Activated B cell treated with CpG ODN at 0.5 μM for 24 hours (primary cell): ENCODE measurements at regions of chr1 and their contacts with region 1.

Region 1: GRCh38 chr1:59020151-59020997 is 236.5 kb upstream of the JUN start:
- DNase-seq: no peak
- ATAC-seq: peak; percentile 96
- H3K4me3 Mint-ChIP-seq: peak overlapping the region; percentile 77
- H3K27ac Mint-ChIP-seq: peak overlapping the region; percentile 91
- H3K4me1 Mint-ChIP-seq: peaks cover 52% of the 10 kb centered on the region
- H3K27me3 Mint-ChIP-seq: no peaks in the 10 kb centered on the region
- CTCF ChIP-seq: no peak

Region 2: DNA sequence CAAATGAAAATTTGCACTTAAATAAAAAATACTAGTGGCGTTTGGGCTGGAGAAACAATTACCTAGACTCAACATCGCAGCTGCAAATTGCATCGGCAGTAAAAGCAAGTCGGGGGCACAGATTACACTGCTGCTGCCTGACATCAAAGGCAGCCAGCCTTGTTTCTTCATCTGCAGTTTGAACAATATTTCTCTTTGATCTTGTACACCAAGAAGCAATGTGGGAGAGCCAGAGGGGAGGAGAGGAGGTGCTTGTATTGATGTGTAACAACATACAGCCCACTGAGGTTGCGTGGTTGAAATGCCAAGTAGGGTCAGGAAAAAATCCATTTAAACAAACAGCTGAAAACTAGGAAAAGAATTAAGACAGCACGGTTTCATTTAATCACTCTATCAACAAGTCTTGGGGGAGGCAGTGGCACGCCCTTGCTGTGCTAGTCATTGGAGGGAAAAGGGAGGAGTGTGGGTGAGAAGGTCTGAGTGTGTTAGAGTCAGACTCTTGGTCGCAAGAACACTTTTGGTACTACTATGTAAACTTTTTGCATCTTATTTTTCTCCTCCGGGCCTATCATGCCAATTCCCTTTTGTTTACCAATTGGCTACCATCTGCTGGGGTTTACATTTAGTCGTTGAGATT is 930.4 kb before region 1 on chr1:
- CTCF ChIA-PET with region 1: no interaction called
- POLR2A ChIA-PET with region 1: no interaction called
- intact Hi-C with region 1: no loop called
- DNase-seq: no peak
- ATAC-seq: no peak
- H3K4me3 Mint-ChIP-seq: no peak overlapping the region
- H3K27ac Mint-ChIP-seq: no peak overlapping the region
- H3K4me1 Mint-ChIP-seq: no peaks in the 10 kb centered on the region
- H3K27me3 Mint-ChIP-seq: peaks cover 8% of the 10 kb centered on the region
- CTCF ChIP-seq: no peak

Region 3: DNA sequence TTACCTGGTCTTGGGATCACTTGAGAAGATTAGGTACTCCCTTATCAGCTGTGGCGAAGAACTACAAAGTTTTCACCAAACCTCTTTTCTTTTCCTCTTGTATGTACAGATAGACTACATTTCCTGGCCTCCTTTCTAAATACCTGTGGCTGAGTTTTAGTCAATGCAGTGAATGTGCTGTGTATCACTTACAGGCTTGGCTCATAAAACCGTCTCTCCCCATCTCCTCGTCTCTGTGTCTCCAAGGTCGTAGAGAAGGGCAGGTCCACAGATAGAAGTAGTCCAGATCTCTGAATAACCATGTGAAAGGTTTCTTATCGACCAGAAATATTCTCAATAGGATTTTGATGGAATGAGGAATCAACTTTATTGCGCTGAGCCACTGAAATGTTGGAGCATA is 227.5 kb before region 1 on chr1:
- CTCF ChIA-PET with region 1: no interaction called
- POLR2A ChIA-PET with region 1: no interaction called
- intact Hi-C with region 1: no loop called
- DNase-seq: no peak
- ATAC-seq: no peak
- H3K4me3 Mint-ChIP-seq: no peak overlapping the region
- H3K27ac Mint-ChIP-seq: no peak overlapping the region
- H3K4me1 Mint-ChIP-seq: peaks cover 29% of the 10 kb centered on the region
- H3K27me3 Mint-ChIP-seq: no peaks in the 10 kb centered on the region
- CTCF ChIP-seq: no peak

Region 4: DNA sequence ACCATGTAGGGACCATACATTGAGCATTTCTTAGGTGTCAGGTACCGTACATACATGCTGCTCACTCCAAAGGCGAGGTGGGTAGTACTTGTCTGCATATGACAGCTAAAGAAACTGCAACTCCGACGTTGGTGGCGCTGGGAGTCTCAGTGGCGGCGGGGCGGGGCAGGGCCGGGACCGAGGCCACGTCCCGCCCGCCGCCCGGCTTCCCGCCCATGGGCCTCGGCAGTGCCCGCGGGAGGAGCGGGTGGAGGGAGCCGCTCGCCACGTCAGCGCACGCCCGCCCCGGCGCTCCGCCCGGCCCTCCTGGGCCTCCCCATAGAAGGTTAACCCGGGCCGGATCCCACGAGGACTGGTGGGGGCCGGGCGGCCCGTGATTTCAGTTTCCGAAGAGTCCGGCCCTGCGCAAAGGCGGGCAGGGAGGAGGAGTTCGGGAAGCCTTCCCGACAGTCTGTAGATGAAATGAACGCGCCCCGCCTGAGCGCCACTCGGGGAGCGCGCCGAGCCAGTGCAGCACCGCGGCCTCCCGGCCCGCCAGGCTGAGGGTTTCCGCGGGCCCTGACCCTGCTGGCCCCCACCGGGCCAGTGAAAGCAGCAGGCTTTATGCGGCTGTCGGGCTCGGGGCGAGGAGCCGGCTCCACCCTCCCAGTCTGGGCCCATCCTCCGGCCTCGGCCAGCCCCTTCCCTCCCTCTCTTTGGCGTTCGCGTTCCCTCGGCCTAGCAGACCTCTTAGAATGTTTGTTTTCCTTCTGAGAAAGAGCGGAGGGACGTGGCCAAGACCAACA is 116.7 kb before region 1 on chr1:
- CTCF ChIA-PET with region 1: no interaction called
- POLR2A ChIA-PET with region 1: interaction called, 3 read pairs
- intact Hi-C with region 1: loop called (anchors 1 kb)
- DNase-seq: peak; percentile 75
- ATAC-seq: peak; percentile 90
- H3K4me3 Mint-ChIP-seq: peak overlapping the region; percentile 84
- H3K27ac Mint-ChIP-seq: peak overlapping the region; percentile 81
- H3K4me1 Mint-ChIP-seq: peaks cover 16% of the 10 kb centered on the region
- H3K27me3 Mint-ChIP-seq: no peaks in the 10 kb centered on the region
- CTCF ChIP-seq: no peak

Region 5: DNA sequence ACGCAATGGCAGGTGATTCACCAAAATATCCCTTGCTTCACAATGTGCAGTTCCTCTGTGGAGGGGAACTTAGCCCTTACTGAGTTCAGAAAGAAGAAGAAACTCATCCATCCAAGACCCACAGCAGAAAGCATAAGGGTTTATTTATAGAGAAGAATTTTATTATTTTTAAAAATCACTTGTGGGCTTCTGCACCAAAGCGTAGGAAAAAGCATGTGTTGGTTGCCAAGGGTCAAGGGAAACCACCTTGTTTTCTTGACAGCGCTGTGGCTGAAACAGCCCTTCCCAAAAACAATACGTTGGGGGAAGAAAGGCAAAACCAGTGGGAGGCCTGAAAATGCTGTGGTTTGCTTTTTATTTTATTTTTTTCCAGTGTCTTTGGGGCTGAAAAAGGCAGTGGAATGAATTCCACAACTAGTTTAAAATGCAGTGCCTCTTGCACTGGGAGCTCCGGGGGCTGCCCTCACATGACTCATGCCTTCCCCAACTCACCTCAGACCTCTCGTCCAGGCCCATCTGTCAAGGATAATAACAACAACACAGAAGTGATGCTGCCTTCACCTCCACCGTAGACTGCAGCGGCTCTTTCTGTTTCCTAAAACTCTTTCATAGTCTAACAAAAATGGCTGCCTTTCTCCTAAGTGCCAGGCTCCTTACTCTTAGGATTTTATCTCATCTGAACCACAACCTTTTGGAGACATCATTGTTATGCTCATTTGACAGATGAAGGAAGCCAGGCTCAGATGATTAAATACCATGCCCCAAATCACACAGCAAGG is 12.4 kb before region 1 on chr1:
- CTCF ChIA-PET with region 1: interaction called, 3 read pairs
- POLR2A ChIA-PET with region 1: interaction called, 10 read pairs
- intact Hi-C with region 1: loop called (anchors 1 kb)
- DNase-seq: no peak
- ATAC-seq: peak; percentile 76
- H3K4me3 Mint-ChIP-seq: peak overlapping the region; percentile 62
- H3K27ac Mint-ChIP-seq: peak overlapping the region; percentile 90
- H3K4me1 Mint-ChIP-seq: peaks cover 82% of the 10 kb centered on the region
- H3K27me3 Mint-ChIP-seq: no peaks in the 10 kb centered on the region
- CTCF ChIP-seq: no peak

Region 6: GRCh38 chr1:59046730-59047157 is 26.4 kb after region 1 on chr1:
- CTCF ChIA-PET with region 1: no interaction called
- POLR2A ChIA-PET with region 1: interaction called, 5 read pairs
- intact Hi-C with region 1: loop called (anchors 2 kb)
- DNase-seq: peak; percentile 22
- ATAC-seq: peak; percentile 96
- H3K4me3 Mint-ChIP-seq: no peak overlapping the region
- H3K27ac Mint-ChIP-seq: peak overlapping the region; percentile 91
- H3K4me1 Mint-ChIP-seq: peaks cover 31% of the 10 kb centered on the region
- H3K27me3 Mint-ChIP-seq: no peaks in the 10 kb centered on the region
- CTCF ChIP-seq: no peak

Region 7: GRCh38 chr1:59146651-59147358 is 126.4 kb after region 1 on chr1:
- CTCF ChIA-PET with region 1: no interaction called
- POLR2A ChIA-PET with region 1: interaction called, 3 read pairs
- intact Hi-C with region 1: loop called (anchors 5 kb)
- DNase-seq: peak; percentile 64
- ATAC-seq: peak; percentile 84
- H3K4me3 Mint-ChIP-seq: peak overlapping the region; percentile 85
- H3K27ac Mint-ChIP-seq: peak overlapping the region; percentile 82
- H3K4me1 Mint-ChIP-seq: peaks cover 46% of the 10 kb centered on the region
- H3K27me3 Mint-ChIP-seq: no peaks in the 10 kb centered on the region
- CTCF ChIP-seq: no peak

Region 8: DNA sequence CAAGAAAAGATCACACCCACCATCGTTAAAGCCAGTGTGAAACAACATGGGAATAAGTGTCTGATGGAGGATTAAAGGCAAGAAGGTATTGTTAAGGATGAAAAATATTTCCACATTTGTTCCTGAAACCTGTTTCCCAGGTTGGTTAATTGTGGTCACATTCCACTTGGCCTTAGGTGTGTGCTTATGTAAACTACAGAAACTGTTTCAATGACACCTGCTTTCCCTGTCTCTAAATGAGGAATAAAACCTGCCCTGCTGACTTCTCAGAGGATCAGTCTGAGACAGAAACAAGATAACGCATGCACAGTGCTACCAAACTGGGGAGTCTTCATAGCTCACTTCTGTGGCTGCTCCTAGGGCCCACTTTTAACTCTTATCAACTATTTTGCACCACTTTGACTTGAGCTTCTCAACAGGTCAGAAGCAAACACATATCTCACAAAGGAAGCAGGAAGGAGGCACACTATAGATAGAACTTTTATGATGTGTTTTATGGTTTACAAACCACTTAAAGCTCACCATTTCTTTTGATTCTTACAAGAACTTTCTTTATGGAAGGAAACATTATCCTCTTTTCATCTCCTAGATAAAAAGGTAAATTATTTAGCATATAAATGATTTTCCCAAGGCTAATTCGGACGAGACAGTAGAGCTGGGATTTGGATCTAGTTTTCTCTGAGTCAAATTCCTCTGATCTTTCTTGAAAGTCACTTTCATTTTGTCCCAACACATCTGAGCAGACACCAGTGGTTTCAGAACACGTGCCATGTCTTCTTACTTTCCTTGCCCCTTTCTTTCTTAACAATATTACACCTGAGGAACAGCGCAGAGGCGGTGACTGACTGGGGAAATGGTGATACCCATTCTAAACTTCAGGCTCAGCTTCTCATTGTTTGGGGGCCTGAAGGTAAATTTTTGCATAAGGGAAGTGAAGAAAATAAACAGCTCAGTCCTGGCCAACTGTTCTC is 872.8 kb after region 1 on chr1:
- CTCF ChIA-PET with region 1: no interaction called
- POLR2A ChIA-PET with region 1: no interaction called
- intact Hi-C with region 1: no loop called
- DNase-seq: no peak
- ATAC-seq: no peak
- H3K4me3 Mint-ChIP-seq: no peak overlapping the region
- H3K27ac Mint-ChIP-seq: no peak overlapping the region
- H3K4me1 Mint-ChIP-seq: no peaks in the 10 kb centered on the region
- H3K27me3 Mint-ChIP-seq: peaks cover 1% of the 10 kb centered on the region
- CTCF ChIP-seq: no peak